PC-3 (cell line): ENCODE measurements at regions of chr1 and their contacts with region 1.

Region 1: GRCh38 chr1:107262467-107263286 is 121.8 kb downstream of the NTNG1 start:
- DNase-seq: peak; percentile 86
- ATAC-seq: peak; percentile 79
- H3K4me3 ChIP-seq: no peak overlapping the region
- H3K27ac ChIP-seq: peak overlapping the region; percentile 80
- H3K4me1 ChIP-seq: peaks cover 36% of the 10 kb centered on the region
- H3K27me3 ChIP-seq: no peaks in the 10 kb centered on the region
- CTCF ChIP-seq: no peak

Region 2: DNA sequence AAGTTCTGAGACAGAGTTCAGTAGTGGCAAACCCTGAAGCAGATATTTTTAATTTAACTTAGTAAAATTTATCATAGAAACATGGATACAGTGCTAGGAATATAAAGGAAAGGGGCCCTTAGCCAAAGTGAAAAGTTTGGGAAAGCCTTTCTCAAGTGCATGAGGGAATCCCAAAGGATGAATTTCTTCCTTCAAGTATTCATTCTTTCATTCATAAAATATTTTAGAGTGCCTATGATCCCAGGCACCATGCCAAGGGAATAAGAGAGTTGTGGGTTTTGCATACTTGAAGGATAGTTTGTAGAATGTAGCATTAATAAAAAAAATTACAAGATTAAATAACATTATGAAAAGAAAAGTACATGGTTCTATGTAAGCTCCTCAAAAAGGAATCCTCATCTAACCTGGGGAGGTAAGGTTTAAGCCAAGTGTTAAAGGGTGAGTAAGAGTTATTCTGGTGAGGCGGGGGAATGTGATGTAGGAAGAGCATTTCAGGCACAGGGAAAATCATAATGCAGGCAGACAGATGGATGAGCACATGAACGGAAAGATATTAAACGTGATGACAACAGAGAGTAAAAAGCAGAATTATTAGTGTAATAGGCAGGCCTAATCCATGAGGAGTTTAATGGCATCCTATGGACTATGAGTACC is 162.2 kb before region 1 on chr1:
- CTCF ChIA-PET with region 1: no interaction called
- POLR2A ChIA-PET with region 1: no interaction called
- intact Hi-C with region 1: no loop called
- DNase-seq: no peak
- ATAC-seq: no peak
- H3K4me3 ChIP-seq: no peak overlapping the region
- H3K27ac ChIP-seq: no peak overlapping the region
- H3K4me1 ChIP-seq: no peaks in the 10 kb centered on the region
- H3K27me3 ChIP-seq: no peaks in the 10 kb centered on the region
- CTCF ChIP-seq: no peak

Region 3: DNA sequence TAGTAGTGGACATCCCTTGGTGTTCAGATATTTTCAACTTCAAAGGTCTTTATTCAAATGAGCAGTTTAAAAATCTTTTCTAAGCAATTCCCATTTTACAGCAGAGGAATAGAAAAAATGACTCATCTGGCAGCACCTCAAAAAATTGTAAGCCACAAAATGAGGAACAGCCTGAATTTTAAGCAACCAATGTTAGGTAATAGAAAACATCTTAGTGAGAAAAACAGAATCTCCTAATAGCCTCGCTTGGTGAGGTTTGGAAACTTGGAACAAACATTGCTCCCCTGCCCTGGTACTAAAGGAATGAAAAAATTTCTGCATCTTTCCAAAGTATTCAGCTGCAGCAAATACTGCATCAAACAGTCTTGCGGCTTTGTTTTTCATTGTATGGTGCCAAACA is 142.6 kb after region 1 on chr1:
- CTCF ChIA-PET with region 1: no interaction called
- POLR2A ChIA-PET with region 1: no interaction called
- intact Hi-C with region 1: no loop called
- DNase-seq: peak; percentile 20
- ATAC-seq: no peak
- H3K4me3 ChIP-seq: no peak overlapping the region
- H3K27ac ChIP-seq: no peak overlapping the region
- H3K4me1 ChIP-seq: no peaks in the 10 kb centered on the region
- H3K27me3 ChIP-seq: no peaks in the 10 kb centered on the region
- CTCF ChIP-seq: no peak

Region 4: DNA sequence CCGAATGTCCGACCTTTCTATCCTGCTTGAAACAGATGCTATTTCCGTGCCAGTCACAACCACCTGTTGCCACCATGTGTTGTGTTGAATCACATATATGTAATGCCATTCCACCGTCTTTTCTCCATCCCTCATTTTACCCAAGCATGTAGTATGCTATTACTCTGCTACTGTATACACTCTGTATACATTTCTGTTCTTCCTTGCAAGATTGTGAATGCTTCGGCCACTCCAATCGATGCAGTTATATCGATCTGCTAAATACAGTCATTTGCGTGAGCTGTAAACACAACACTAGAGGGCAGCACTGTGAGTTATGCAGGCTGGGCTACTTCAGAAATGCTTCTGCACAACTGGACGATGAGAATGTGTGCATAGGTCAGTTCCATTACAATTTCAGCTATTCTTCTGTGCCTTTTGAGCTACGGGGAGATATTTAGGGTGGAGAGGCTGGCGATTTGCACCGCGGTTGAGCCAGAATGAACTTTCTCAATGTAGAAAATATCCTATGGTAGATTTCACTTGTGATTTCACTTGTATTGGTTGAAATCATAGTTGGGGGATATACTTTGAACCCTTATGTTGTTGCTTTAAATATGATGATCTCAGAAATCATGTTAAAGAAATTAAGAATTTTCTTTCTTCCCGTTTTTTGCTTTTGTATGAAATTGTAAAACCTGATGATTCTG is 168.0 kb after region 1 on chr1:
- CTCF ChIA-PET with region 1: no interaction called
- POLR2A ChIA-PET with region 1: no interaction called
- intact Hi-C with region 1: loop called (anchors 10 kb)
- DNase-seq: peak; percentile 75
- ATAC-seq: peak; percentile 73
- H3K4me3 ChIP-seq: no peak overlapping the region
- H3K27ac ChIP-seq: no peak overlapping the region
- H3K4me1 ChIP-seq: no peaks in the 10 kb centered on the region
- H3K27me3 ChIP-seq: no peaks in the 10 kb centered on the region
- CTCF ChIP-seq: peak; percentile 95